K562 (cell line): ENCODE measurements at regions of chr1 and their contacts with region 1.

Region 1: GRCh38 chr1:220810179-220810653 is 23.5 kb downstream of the MTARC1 start:
- DNase-seq: peak; percentile 74 to 86 (median 82)
- ATAC-seq: peak; percentile 93
- H3K4me3 ChIP-seq: no peak overlapping the region
- H3K27ac ChIP-seq: no peak overlapping the region
- H3K4me1 ChIP-seq: peaks cover 2 to 4% of the 10 kb centered on the region in 2 experiments; a peak in 3 of 5 replicates
- H3K27me3 ChIP-seq: peaks cover 2 to 20% of the 10 kb centered on the region in 2 experiments; a peak in 3 of 5 replicates
- CTCF ChIP-seq: peak; percentile 91 to 95 (median 92)
- EP300 ChIP-seq: no peak
- POLR2A ChIP-seq: no peak
- RAD21 ChIP-seq: peak; percentile 69 to 80

Region 2: DNA sequence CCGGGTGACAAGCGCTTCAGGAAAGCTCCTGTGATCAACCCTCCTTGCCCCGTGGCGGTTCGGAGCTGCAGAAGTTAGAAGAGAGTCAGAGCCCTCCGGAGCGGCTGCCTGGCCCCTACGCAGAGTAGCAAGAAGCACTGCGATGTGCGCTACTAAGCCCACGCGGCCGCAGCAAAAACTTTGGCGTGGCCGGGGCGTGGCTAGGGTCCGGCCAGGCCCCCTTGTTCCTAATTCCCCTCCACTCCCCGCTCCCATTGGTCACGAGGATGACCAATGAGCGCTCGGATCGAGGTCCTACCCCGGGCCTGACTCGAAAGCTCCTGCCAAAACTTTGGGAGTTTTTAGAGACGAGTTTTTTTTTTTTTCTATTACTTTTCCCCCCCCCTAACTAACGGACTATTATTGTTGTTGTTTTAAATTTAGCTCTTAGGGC is 68.9 kb after region 1 on chr1 and contains the start of gene HLX:
- CTCF ChIA-PET with region 1: no interaction called
- POLR2A ChIA-PET with region 1: no interaction called
- in situ Hi-C with region 1: no loop called
- intact Hi-C with region 1: loop called (anchors 5 kb)
- DNase-seq: peak; percentile 85 to 96 (median 96)
- ATAC-seq: peak; percentile 92
- H3K4me3 ChIP-seq: peak within 1 kb of the TSS; percentile 59
- H3K27ac ChIP-seq: peak within 1 kb of the TSS; percentile 66; the same call in 2 of the 3 replicates
- H3K4me1 ChIP-seq: peaks cover 0 to 31% of the 10 kb centered on the region in 2 experiments; a peak in 2 of 5 replicates
- H3K27me3 ChIP-seq: peaks cover 10 to 35% of the 10 kb centered on the region in 2 experiments; a peak in 4 of 5 replicates
- CTCF ChIP-seq: no peak
- EP300 ChIP-seq: no peak
- POLR2A ChIP-seq: 0 out of 2 replicates have a peak, but pooled peaks have one; percentile 42
- RAD21 ChIP-seq: no peak
- polyA plus RNA-seq, gene HLX: 0.10 TPM

Region 3: GRCh38 chr1:221013691-221014660 is 203.8 kb after region 1 on chr1:
- CTCF ChIA-PET with region 1: no interaction called
- POLR2A ChIA-PET with region 1: no interaction called
- in situ Hi-C with region 1: no loop called
- intact Hi-C with region 1: loop called (anchors 10 kb)
- DNase-seq: no peak
- ATAC-seq: no peak
- H3K4me3 ChIP-seq: no peak overlapping the region
- H3K27ac ChIP-seq: no peak overlapping the region
- H3K4me1 ChIP-seq: no peaks in the 10 kb centered on the region
- H3K27me3 ChIP-seq: no peaks in the 10 kb centered on the region
- CTCF ChIP-seq: no peak
- EP300 ChIP-seq: no peak
- POLR2A ChIP-seq: no peak
- RAD21 ChIP-seq: no peak

Region 4: DNA sequence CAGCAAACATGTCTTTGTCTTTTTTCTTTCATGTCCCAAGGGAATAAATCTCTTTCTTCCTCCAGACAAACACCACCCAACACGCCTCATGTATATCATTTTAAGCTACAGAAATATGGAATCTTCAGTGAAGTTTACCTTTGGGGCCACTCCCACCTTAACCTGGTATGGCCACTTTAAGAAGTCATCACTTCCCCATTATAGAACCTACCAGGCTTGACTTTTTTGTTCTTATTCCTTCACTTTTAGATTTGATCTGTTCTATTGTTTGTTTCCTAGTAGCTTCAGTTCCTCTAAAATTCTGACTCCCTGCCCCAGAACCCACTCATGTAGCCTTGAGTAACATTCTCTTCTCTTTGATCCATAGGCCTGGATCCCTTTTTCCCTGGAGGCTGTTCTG is 295.4 kb after region 1 on chr1:
- CTCF ChIA-PET with region 1: no interaction called
- POLR2A ChIA-PET with region 1: no interaction called
- in situ Hi-C with region 1: no loop called
- intact Hi-C with region 1: no loop called
- DNase-seq: no peak
- ATAC-seq: no peak
- H3K4me3 ChIP-seq: no peak overlapping the region
- H3K27ac ChIP-seq: no peak overlapping the region
- H3K4me1 ChIP-seq: no peaks in the 10 kb centered on the region
- H3K27me3 ChIP-seq: no peaks in the 10 kb centered on the region
- CTCF ChIP-seq: no peak
- EP300 ChIP-seq: no peak
- POLR2A ChIP-seq: no peak
- RAD21 ChIP-seq: no peak